ENCODE measurements at regions of chr14 and their contacts with region 1.

Region 1: GRCh38 chr14:78566026-78566858 is 396.1 kb downstream of the NRXN3 start:
- DNase-seq: peak; percentile 82
- H3K4me3 ChIP-seq: no peak overlapping the region
- H3K27ac ChIP-seq: no peak overlapping the region
- H3K4me1 ChIP-seq: peaks cover 10% of the 10 kb centered on the region
- H3K27me3 ChIP-seq: no peaks in the 10 kb centered on the region
- CTCF ChIP-seq: peak; percentile 78 to 88
- POLR2A ChIP-seq: no peak

Region 2: DNA sequence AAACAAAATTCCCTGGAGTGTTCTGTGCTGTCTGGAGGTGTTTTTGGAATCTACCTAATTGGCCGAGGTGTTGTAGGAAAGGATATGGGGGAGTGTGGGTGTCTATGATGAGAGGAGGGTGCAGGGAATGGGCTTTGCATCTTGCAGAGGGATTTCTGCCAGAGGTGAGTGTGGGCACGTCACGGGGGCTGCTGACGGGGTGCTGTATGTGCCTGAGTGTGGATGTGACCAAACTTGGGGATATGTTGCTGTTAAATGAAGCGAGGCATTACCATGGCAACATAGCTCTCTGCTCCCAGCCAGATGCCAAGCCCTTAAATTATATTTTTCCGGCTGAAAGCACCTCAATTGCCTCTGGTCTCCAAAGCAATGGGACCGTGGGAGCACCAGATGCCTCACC is 905.5 kb before region 1 on chr14:
- CTCF ChIA-PET with region 1: interaction called, 36 read pairs
- POLR2A ChIA-PET with region 1: no interaction called
- dilution Hi-C with region 1: no loop called
- intact Hi-C with region 1: no loop called
- DNase-seq: no peak
- H3K4me3 ChIP-seq: no peak overlapping the region
- H3K27ac ChIP-seq: no peak overlapping the region
- H3K4me1 ChIP-seq: peaks cover 12% of the 10 kb centered on the region
- H3K27me3 ChIP-seq: no peaks in the 10 kb centered on the region
- CTCF ChIP-seq: no peak
- POLR2A ChIP-seq: no peak

Region 3: GRCh38 chr14:78022059-78022458 is 544.2 kb before region 1 on chr14:
- CTCF ChIA-PET with region 1: interaction called, 37 read pairs
- POLR2A ChIA-PET with region 1: no interaction called
- dilution Hi-C with region 1: no loop called
- intact Hi-C with region 1: loop called (anchors 1 kb)
- DNase-seq: peak; percentile 44
- H3K4me3 ChIP-seq: no peak overlapping the region
- H3K27ac ChIP-seq: no peak overlapping the region
- H3K4me1 ChIP-seq: no peaks in the 10 kb centered on the region
- H3K27me3 ChIP-seq: no peaks in the 10 kb centered on the region
- CTCF ChIP-seq: peak; percentile 54 to 61
- POLR2A ChIP-seq: no peak

Region 4: DNA sequence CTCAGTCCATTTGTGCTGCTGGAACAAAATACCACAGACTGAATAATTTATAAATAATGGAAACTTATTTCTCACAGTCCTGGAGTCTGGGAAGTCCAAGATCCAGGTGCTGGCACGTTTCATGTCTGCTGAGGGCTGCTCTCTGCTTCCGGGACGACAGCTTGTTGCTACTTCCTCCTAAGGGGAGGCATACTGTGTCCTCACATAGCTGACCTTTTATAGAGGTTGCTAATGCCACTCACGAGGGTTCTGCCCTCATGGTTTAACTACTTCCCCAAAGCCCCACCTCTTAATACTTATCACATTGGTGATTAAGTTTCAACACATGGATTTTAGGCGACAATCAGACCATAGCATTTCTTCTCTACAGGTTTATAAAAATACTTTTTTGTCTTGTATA is 15.0 kb after region 1 on chr14:
- CTCF ChIA-PET with region 1: interaction called, 30 read pairs
- POLR2A ChIA-PET with region 1: no interaction called
- dilution Hi-C with region 1: no loop called
- intact Hi-C with region 1: no loop called
- DNase-seq: no peak
- H3K4me3 ChIP-seq: no peak overlapping the region
- H3K27ac ChIP-seq: no peak overlapping the region
- H3K4me1 ChIP-seq: no peaks in the 10 kb centered on the region
- H3K27me3 ChIP-seq: no peaks in the 10 kb centered on the region
- CTCF ChIP-seq: no peak
- POLR2A ChIP-seq: no peak

Region 5: DNA sequence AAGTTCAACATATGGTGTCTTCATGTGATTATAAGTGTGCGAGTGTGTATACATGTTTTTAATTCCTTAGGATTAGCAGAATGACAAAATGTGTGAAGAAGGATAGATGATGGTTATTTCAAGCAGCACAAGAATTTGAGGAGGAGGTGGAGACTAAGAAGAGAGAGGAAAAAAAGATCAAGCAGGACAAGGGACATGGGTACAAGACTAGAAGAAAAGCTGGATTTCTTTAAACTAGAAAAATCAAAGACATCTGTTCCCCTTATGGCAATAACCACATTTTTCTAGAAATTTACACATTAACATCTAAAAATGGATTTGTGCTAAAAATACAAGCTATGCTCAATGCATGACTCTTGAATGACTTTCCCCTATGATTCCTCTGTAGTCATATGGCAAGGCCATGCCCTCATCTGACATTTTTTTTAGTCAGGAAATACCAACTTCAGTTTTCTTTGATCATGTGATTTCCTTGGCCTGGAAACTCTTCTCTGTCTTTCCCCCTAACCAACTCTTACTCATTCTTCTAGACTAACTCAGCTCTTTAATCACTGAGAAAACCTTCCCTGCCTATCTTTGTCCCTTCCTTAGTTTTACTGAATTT is 39.8 kb after region 1 on chr14:
- CTCF ChIA-PET with region 1: interaction called, 17 read pairs
- POLR2A ChIA-PET with region 1: no interaction called
- dilution Hi-C with region 1: no loop called
- intact Hi-C with region 1: no loop called
- DNase-seq: peak; percentile 84
- H3K4me3 ChIP-seq: peak overlapping the region in 1 of 3 experiments; percentile 6
- H3K27ac ChIP-seq: peak overlapping the region; percentile 53
- H3K4me1 ChIP-seq: peaks cover 19% of the 10 kb centered on the region
- H3K27me3 ChIP-seq: no peaks in the 10 kb centered on the region
- CTCF ChIP-seq: no peak
- POLR2A ChIP-seq: no peak